ENCODE measurements at regions of chr2 and their contacts with region 1.

Region 1: DNA sequence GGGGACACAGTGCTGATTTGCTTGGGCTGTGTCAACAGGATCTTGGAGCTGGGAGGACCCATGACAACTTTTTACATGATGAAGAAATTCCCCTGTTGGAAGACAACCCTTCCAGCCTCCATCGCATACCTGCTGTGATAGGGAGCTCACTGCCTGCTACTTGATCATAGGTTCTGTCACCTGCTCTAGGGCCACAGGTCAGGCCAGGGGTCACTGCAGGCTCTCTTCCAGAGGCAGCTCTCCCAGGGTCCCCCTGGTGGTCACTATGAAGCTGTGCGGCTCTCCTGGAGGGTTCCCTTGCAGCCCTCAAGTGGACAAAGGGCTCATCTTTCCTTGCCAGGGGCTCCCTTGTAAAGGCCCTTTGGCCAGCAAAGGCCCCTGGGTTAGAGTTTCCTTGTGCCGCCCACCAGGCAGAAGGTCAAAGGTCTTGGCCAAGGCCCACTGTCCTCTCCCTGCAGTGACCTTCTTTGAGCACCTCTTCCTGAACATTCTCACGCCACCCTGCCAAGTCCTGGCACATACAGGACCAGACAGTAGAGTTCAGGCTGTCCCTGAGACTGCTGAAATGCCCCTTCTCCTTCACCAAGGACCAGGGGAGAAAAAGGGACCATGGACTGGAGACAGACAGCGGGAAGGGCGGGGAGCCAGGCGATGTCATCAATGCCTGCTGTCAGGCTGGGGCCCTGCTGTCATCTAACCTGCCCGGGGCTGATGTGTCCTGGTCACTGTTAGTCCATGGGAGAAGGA is 345.1 kb downstream of the DYSF start:
- DNase-seq: peak; percentile 39 to 83
- H3K4me3 ChIP-seq: no peak overlapping the region
- H3K27ac ChIP-seq: no peak overlapping the region
- H3K4me1 ChIP-seq: peaks cover 0 to 5% (median 0%) of the 10 kb centered on the region in 4 experiments; a peak in 1 of 7 replicates
- H3K27me3 ChIP-seq: no peaks in the 10 kb centered on the region
- CTCF ChIP-seq: peak; percentile 89 to 99 (median 92)
- EP300 ChIP-seq: no peak
- POLR2A ChIP-seq: no peak
- RAD21 ChIP-seq: peak; percentile 81 to 91

Region 2: GRCh38 chr2:71536226-71536671 is 262.2 kb before region 1 on chr2:
- CTCF ChIA-PET with region 1: interaction called, 18 read pairs
- POLR2A ChIA-PET with region 1: no interaction called
- DNase-seq: no peak
- H3K4me3 ChIP-seq: no peak overlapping the region
- H3K27ac ChIP-seq: no peak overlapping the region
- H3K4me1 ChIP-seq: no peaks in the 10 kb centered on the region
- H3K27me3 ChIP-seq: no peaks in the 10 kb centered on the region
- CTCF ChIP-seq: no peak
- EP300 ChIP-seq: no peak
- POLR2A ChIP-seq: no peak
- RAD21 ChIP-seq: no peak

Region 3: GRCh38 chr2:71662611-71663394 is 135.6 kb before region 1 on chr2:
- CTCF ChIA-PET with region 1: interaction called, 97 read pairs
- POLR2A ChIA-PET with region 1: no interaction called
- DNase-seq: peak in 1 of 2 experiments; percentile 35
- H3K4me3 ChIP-seq: no peak overlapping the region
- H3K27ac ChIP-seq: no peak overlapping the region
- H3K4me1 ChIP-seq: no peaks in the 10 kb centered on the region
- H3K27me3 ChIP-seq: no peaks in the 10 kb centered on the region
- CTCF ChIP-seq: no peak
- EP300 ChIP-seq: no peak
- POLR2A ChIP-seq: no peak
- RAD21 ChIP-seq: no peak

Region 4: DNA sequence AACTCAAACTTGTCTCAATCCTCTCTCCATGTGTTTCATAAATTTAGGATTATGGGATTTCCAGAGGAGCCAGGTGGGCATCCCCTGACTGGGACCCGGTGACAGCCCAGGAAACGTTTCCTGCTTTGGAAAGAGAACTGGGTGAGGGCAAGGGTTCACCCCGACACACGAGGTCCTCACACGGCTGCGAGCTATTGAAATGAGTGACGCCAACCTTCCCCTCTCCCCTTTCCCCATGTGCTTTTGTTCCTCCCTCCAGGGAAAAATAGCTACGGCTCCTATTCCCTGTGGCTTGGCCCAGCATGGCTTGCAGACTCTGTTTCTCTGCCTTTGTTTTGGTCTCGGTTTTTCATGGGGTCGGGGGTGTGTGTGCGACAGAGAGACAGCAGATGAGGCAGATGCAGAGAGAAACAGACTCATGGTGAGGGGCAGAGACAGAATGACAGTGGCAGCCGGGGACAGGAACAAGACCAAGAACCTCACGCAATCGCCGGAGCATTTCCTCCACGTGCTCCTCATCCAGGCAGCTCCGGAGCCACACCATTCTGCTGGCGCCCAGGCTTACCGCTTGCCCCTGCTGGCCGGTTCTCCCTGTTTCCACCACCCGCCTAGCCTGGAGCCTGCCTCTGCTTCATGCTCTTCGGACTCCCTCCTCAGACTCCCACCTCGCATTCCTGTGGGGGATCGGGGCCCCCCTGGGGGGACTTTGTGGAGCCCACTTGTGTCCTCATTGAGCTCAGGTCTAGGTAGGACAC is 106.5 kb before region 1 on chr2:
- CTCF ChIA-PET with region 1: interaction called, 11 read pairs
- POLR2A ChIA-PET with region 1: no interaction called
- DNase-seq: peak in 1 of 2 experiments; percentile 58
- H3K4me3 ChIP-seq: no peak overlapping the region
- H3K27ac ChIP-seq: no peak overlapping the region
- H3K4me1 ChIP-seq: peaks cover 6 to 38% (median 13%) of the 10 kb centered on the region in 4 experiments
- H3K27me3 ChIP-seq: peaks cover 0 to 2% (median 0%) of the 10 kb centered on the region in 4 experiments; a peak in 2 of 7 replicates
- CTCF ChIP-seq: peak in 1 of 3 experiments; percentile 8; a peak in 1 of 4 replicates
- EP300 ChIP-seq: no peak
- POLR2A ChIP-seq: no peak
- RAD21 ChIP-seq: no peak

Region 5: GRCh38 chr2:71813807-71814470 is 15.5 kb after region 1 on chr2:
- CTCF ChIA-PET with region 1: interaction called, 18 read pairs
- POLR2A ChIA-PET with region 1: interaction called, 3 read pairs
- DNase-seq: no peak
- H3K4me3 ChIP-seq: no peak overlapping the region
- H3K27ac ChIP-seq: no peak overlapping the region
- H3K4me1 ChIP-seq: no peaks in the 10 kb centered on the region
- H3K27me3 ChIP-seq: no peaks in the 10 kb centered on the region
- CTCF ChIP-seq: no peak
- EP300 ChIP-seq: no peak
- POLR2A ChIP-seq: no peak
- RAD21 ChIP-seq: no peak

Region 6: GRCh38 chr2:71897137-71897480 is 98.7 kb after region 1 on chr2:
- CTCF ChIA-PET with region 1: interaction called, 17 read pairs
- POLR2A ChIA-PET with region 1: no interaction called
- DNase-seq: no peak
- H3K4me3 ChIP-seq: no peak overlapping the region
- H3K27ac ChIP-seq: no peak overlapping the region
- H3K4me1 ChIP-seq: no peaks in the 10 kb centered on the region; a peak in 1 of 7 replicates
- H3K27me3 ChIP-seq: no peaks in the 10 kb centered on the region; a peak in 1 of 7 replicates
- CTCF ChIP-seq: no peak
- EP300 ChIP-seq: no peak
- POLR2A ChIP-seq: no peak
- RAD21 ChIP-seq: no peak

Region 7: GRCh38 chr2:72150157-72150865 is 351.9 kb after region 1 on chr2:
- CTCF ChIA-PET with region 1: interaction called, 49 read pairs
- POLR2A ChIA-PET with region 1: no interaction called
- DNase-seq: peak in 1 of 2 experiments; percentile 95
- H3K4me3 ChIP-seq: peak overlapping the region; percentile 49 to 56 (median 52); a peak in 7 of 8 replicates
- H3K27ac ChIP-seq: no peak overlapping the region
- H3K4me1 ChIP-seq: peaks cover 7 to 28% (median 16%) of the 10 kb centered on the region in 4 experiments
- H3K27me3 ChIP-seq: peaks cover 36 to 62% (median 58%) of the 10 kb centered on the region in 4 experiments
- CTCF ChIP-seq: peak in 2 of 3 experiments; percentile 79 to 89; a peak in 3 of 4 replicates
- EP300 ChIP-seq: no peak
- POLR2A ChIP-seq: no peak
- RAD21 ChIP-seq: peak; percentile 92 to 93

Measured in H1 (cell line).